Endothelial cell of umbilical vein (primary cell): ENCODE measurements at regions of chr3 and their contacts with region 1.

Region 1: GRCh38 chr3:160133757-160134156 is 91.5 kb upstream of the C3orf80 start:
- DNase-seq: peak; percentile 41
- H3K4me3 ChIP-seq: no peak overlapping the region
- H3K27ac ChIP-seq: no peak overlapping the region
- H3K4me1 ChIP-seq: peaks cover 14% of the 10 kb centered on the region
- H3K27me3 ChIP-seq: no peaks in the 10 kb centered on the region
- CTCF ChIP-seq: peak; percentile 38 to 61
- POLR2A ChIP-seq: no peak

Region 2: DNA sequence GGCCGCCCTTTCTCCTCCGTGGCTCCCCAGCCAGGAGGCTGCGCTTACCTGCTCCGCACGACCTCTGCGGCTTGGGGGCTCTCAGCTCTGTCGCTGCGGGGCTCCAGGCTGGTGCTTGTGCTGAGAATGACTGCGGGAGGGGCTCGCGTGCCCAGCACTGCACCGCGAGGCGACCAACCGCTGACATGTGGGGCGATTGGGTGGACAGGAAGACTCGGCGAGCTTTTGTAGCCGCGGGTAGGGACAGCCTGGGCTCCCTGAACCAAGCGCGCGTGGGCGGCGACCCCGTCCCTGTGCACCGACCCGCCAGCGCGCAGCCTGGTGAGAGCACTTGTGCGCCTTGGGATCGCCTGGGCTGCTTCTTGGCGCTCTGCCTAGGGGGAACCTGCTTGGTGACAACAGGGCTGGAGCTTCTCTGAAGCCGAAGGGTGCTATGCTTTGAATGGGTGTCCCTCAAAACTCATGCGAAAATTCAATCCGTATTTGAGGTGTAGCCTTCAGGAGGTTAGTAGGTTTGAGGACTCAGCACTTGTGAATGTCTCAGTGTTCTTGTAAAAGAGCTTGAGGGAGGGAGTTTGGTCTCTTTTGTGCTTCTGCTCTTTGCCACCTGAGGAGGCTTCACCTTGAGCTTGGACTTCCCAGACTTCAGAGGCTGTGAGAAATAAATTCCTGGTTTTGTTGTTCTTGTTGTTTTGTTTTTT is 94.7 kb before region 1 on chr3:
- CTCF ChIA-PET with region 1: interaction called, 86 read pairs
- POLR2A ChIA-PET with region 1: no interaction called
- dilution Hi-C with region 1: no loop called
- intact Hi-C with region 1: no loop called
- DNase-seq: peak; percentile 20
- H3K4me3 ChIP-seq: no peak overlapping the region
- H3K27ac ChIP-seq: no peak overlapping the region
- H3K4me1 ChIP-seq: no peaks in the 10 kb centered on the region
- H3K27me3 ChIP-seq: peaks cover 29 to 36% of the 10 kb centered on the region in 2 experiments
- CTCF ChIP-seq: no peak
- POLR2A ChIP-seq: no peak

Region 3: DNA sequence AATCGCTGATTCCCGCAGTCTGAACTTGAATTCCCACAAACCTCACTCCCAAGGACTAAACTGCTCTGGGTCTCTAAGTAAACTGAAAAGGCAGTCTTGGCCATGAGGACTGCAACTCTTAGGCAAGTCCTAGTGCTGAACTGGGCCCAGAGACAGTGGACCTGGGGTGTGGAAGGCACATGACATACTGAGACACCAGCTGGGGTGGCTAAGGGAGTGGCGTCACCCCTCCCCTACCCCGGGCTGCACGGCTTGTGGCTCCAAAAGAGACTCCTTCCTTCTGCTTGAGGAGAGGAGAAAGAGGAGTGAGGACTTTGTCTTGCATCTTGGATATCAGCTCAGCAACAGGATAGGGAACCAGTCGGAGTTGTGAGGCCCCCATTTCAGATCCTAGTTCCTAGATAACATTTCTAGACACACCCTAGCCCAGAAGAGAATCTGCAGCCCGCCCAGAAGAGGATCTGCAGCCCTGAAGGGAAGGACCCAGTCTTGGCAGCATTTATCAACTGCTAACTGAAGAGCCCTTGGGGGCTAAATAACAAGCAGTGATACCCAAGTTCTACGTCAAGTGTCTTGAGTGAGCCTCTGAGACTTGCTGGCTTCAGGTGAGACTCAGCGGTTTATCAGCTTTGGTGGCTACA is 19.3 kb before region 1 on chr3:
- CTCF ChIA-PET with region 1: interaction called, 14 read pairs
- POLR2A ChIA-PET with region 1: no interaction called
- dilution Hi-C with region 1: no loop called
- intact Hi-C with region 1: no loop called
- DNase-seq: no peak
- H3K4me3 ChIP-seq: no peak overlapping the region
- H3K27ac ChIP-seq: no peak overlapping the region
- H3K4me1 ChIP-seq: no peaks in the 10 kb centered on the region
- H3K27me3 ChIP-seq: peaks cover 7 to 8% of the 10 kb centered on the region in 2 experiments
- CTCF ChIP-seq: no peak
- POLR2A ChIP-seq: no peak

Region 4: GRCh38 chr3:160157321-160157720 is 23.6 kb after region 1 on chr3:
- CTCF ChIA-PET with region 1: no interaction called
- POLR2A ChIA-PET with region 1: no interaction called
- dilution Hi-C with region 1: no loop called
- intact Hi-C with region 1: no loop called
- DNase-seq: no peak
- H3K4me3 ChIP-seq: no peak overlapping the region
- H3K27ac ChIP-seq: no peak overlapping the region
- H3K4me1 ChIP-seq: no peaks in the 10 kb centered on the region
- H3K27me3 ChIP-seq: no peaks in the 10 kb centered on the region
- CTCF ChIP-seq: no peak
- POLR2A ChIP-seq: no peak